IMR-90 (cell line): ENCODE measurements at regions of chr11 and their contacts with region 1.

Region 1: DNA sequence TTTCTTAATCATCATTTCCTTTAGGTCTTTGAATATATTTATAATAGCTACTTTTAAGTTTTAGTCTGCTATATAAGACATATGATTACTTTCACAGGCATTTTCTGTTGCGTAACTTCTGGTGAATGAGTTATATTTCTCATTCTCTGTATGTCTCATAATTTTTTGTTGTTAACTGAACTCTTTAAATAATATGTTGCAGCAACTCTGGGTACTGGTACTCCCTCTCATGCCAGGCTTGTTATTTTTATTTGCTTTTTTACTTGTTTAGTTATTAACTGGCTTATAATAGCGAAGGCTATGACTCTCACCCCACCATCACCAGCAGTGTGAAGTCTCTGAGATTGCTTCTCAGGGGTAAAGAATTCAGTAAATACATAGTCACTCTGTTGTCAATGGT is 524.2 kb upstream of the CHORDC1 start:
- DNase-seq: no peak
- ATAC-seq: no peak
- H3K4me3 ChIP-seq: no peak overlapping the region
- H3K27ac ChIP-seq: no peak overlapping the region
- H3K4me1 ChIP-seq: no peaks in the 10 kb centered on the region
- H3K27me3 ChIP-seq: no peaks in the 10 kb centered on the region
- CTCF ChIP-seq: no peak
- POLR2A ChIP-seq: no peak
- RAD21 ChIP-seq: no peak

Region 2: GRCh38 chr11:90407350-90407749 is 339.7 kb before region 1 on chr11:
- CTCF ChIA-PET with region 1: no interaction called
- POLR2A ChIA-PET with region 1: no interaction called
- dilution Hi-C with region 1: no loop called
- in situ Hi-C with region 1: no loop called
- intact Hi-C with region 1: no loop called
- DNase-seq: no peak
- ATAC-seq: no peak
- H3K4me3 ChIP-seq: no peak overlapping the region
- H3K27ac ChIP-seq: no peak overlapping the region
- H3K4me1 ChIP-seq: no peaks in the 10 kb centered on the region
- H3K27me3 ChIP-seq: no peaks in the 10 kb centered on the region
- CTCF ChIP-seq: no peak
- POLR2A ChIP-seq: no peak
- RAD21 ChIP-seq: no peak

Region 3: GRCh38 chr11:90732486-90732885 is 14.6 kb before region 1 on chr11:
- CTCF ChIA-PET with region 1: no interaction called
- POLR2A ChIA-PET with region 1: no interaction called
- dilution Hi-C with region 1: no loop called
- in situ Hi-C with region 1: no loop called
- intact Hi-C with region 1: no loop called
- DNase-seq: no peak
- ATAC-seq: no peak
- H3K4me3 ChIP-seq: no peak overlapping the region
- H3K27ac ChIP-seq: no peak overlapping the region
- H3K4me1 ChIP-seq: no peaks in the 10 kb centered on the region
- H3K27me3 ChIP-seq: no peaks in the 10 kb centered on the region
- CTCF ChIP-seq: no peak
- POLR2A ChIP-seq: no peak
- RAD21 ChIP-seq: no peak

Region 4: DNA sequence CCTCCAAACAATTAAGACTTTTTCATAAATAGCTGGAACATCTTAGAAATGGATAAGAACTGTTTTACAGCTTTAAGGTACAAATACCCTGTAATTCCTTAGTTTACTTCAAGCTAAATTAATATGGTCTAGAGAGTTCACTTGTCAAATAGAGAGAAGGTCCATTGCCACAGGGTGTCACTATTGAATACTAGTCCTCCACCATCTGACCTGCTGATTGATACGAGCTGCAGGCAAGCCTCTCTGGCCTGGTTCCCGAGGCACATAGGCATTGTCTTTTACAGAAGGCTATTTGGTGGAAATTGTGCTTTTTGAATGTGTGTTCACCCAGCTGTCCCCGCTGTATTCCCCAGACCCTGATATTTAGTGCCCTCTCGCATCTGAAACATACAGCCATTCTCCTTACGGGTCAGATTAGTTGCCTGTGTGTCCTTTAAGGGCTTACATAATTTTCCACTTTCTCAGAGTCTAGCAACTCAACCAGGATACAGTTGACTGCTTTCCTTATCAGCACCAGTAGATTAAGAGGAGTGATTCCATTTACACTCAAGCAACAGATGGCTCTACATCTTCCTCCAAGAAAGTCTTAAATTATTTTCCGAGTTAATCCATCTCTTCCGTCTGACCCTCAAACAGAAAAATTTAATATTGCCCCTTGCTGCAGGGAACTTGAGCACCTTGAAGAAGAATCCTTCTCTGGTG is 688.8 kb after region 1 on chr11:
- CTCF ChIA-PET with region 1: no interaction called
- POLR2A ChIA-PET with region 1: interaction called, 13 read pairs
- dilution Hi-C with region 1: no loop called
- in situ Hi-C with region 1: no loop called
- intact Hi-C with region 1: no loop called
- DNase-seq: no peak
- ATAC-seq: no peak
- H3K4me3 ChIP-seq: no peak overlapping the region
- H3K27ac ChIP-seq: no peak overlapping the region
- H3K4me1 ChIP-seq: no peaks in the 10 kb centered on the region
- H3K27me3 ChIP-seq: no peaks in the 10 kb centered on the region
- CTCF ChIP-seq: no peak
- POLR2A ChIP-seq: no peak
- RAD21 ChIP-seq: no peak